ENCODE measurements at regions of chr17 and their contacts with region 1.

Region 1: GRCh38 chr17:17812211-17813057 is 24.4 kb downstream of the SREBF1 start:
- DNase-seq: peak in 1 of 2 experiments; percentile 99
- H3K4me3 ChIP-seq: peak overlapping the region in 1 of 4 experiments; percentile 14; a peak in 1 of 8 replicates
- H3K27ac ChIP-seq: no peak overlapping the region
- H3K4me1 ChIP-seq: peaks cover 0 to 20% (median 12%) of the 10 kb centered on the region in 4 experiments; a peak in 6 of 7 replicates
- H3K27me3 ChIP-seq: peaks cover 6 to 23% (median 16%) of the 10 kb centered on the region in 4 experiments
- CTCF ChIP-seq: peak; percentile 93 to 97 (median 97)
- EP300 ChIP-seq: no peak
- POLR2A ChIP-seq: no peak
- RAD21 ChIP-seq: peak; percentile 86 to 92

Region 2: DNA sequence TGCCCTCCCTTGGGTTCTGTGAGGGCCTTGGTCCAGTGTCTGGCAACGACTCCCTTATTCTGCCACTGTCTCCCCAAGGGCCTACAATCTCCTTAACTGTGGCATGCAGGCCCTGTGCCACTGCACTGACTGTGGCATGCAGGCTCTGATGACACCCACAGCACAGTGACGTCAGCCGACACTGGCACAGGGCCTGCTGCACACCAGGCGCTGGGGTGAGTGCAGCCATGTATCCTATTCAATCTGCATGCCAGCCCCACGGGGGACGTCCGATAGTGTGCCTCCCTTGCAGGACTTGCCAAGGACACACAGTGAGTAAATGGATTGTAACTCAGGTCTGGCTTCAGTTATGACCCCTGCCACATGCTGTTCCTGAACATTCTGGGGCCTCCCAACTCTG is 276.5 kb before region 1 on chr17:
- CTCF ChIA-PET with region 1: no interaction called
- POLR2A ChIA-PET with region 1: no interaction called
- DNase-seq: no peak
- H3K4me3 ChIP-seq: no peak overlapping the region
- H3K27ac ChIP-seq: no peak overlapping the region
- H3K4me1 ChIP-seq: no peaks in the 10 kb centered on the region; a peak in 1 of 7 replicates
- H3K27me3 ChIP-seq: no peaks in the 10 kb centered on the region
- CTCF ChIP-seq: no peak
- EP300 ChIP-seq: no peak
- POLR2A ChIP-seq: no peak
- RAD21 ChIP-seq: no peak

Region 3: DNA sequence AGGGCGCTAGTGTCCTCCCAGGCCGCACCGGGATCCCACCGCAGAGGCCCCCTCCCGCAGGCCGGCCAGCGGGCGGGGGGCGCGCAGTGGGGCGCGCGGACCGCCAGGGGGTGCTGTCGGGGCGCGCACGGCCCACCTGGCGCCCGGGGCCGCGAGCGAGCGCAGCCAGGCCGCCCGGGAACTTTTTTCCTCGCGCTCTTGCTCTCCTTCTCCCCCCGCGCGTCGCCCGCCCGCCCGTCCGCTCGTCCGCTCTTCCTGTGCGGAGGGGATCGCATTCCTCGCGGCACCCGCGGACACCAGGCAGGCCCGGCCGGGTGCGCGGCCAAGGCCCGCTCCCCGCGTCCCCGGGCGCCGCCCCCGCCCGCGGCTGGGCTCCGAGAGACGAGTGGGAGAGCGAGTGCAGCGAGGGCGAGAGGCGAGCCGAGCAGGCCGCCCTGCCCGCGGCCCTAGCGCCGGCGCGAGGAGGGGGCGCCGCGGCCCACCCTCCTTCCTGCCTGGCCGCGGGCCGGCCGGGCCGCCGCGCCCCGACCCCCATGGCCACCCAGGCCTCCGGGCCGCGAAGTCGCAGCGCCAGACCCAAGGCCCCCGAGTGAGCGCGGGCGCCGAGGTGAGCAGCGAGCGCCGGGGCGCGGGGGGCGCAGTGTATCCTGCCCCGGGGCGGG is 131.1 kb before region 1 on chr17 and contains the start of gene RAI1:
- CTCF ChIA-PET with region 1: interaction called, 12 read pairs
- POLR2A ChIA-PET with region 1: interaction called, 4 read pairs
- DNase-seq: peak in 1 of 2 experiments; percentile 83
- H3K4me3 ChIP-seq: peak within 1 kb of the TSS; percentile 34 to 71 (median 38); a peak in 6 of 8 replicates
- H3K27ac ChIP-seq: no peak within 1 kb of the TSS
- H3K4me1 ChIP-seq: peaks cover 4 to 30% (median 22%) of the 10 kb centered on the region in 4 experiments
- H3K27me3 ChIP-seq: peaks cover 70 to 96% (median 94%) of the 10 kb centered on the region in 4 experiments
- CTCF ChIP-seq: peak; percentile 77 to 83 (median 80)
- EP300 ChIP-seq: no peak
- POLR2A ChIP-seq: no peak
- RAD21 ChIP-seq: peak; percentile 41 to 82; a peak in 3 of 4 replicates
- total RNA-seq, gene RAI1: 0.80 and 1.2 TPM in 2 replicates

Region 4: GRCh38 chr17:17783116-17783824 is 29.2 kb before region 1 on chr17:
- CTCF ChIA-PET with region 1: interaction called, 48 read pairs
- POLR2A ChIA-PET with region 1: interaction called, 5 read pairs
- DNase-seq: peak; percentile 38 to 83
- H3K4me3 ChIP-seq: peak overlapping the region; percentile 58 to 75 (median 64)
- H3K27ac ChIP-seq: no peak overlapping the region
- H3K4me1 ChIP-seq: peaks cover 20 to 38% (median 27%) of the 10 kb centered on the region in 4 experiments
- H3K27me3 ChIP-seq: peaks cover 0 to 40% (median 13%) of the 10 kb centered on the region in 4 experiments; a peak in 6 of 7 replicates
- CTCF ChIP-seq: peak; percentile 5 to 26 (median 21); a peak in 3 of 4 replicates
- EP300 ChIP-seq: no peak
- POLR2A ChIP-seq: no peak
- RAD21 ChIP-seq: no peak

Region 5: GRCh38 chr17:17823433-17824118 is 11.1 kb after region 1 on chr17:
- CTCF ChIA-PET with region 1: interaction called, 32 read pairs
- POLR2A ChIA-PET with region 1: interaction called, 532 read pairs
- DNase-seq: peak in 1 of 2 experiments; percentile 93
- H3K4me3 ChIP-seq: peak overlapping the region in 3 of 4 experiments; percentile 29 to 51 (median 38); a peak in 7 of 8 replicates
- H3K27ac ChIP-seq: peak overlapping the region; percentile 78
- H3K4me1 ChIP-seq: peaks cover 13 to 37% (median 27%) of the 10 kb centered on the region in 4 experiments
- H3K27me3 ChIP-seq: no peaks in the 10 kb centered on the region; a peak in 1 of 7 replicates
- CTCF ChIP-seq: no peak
- EP300 ChIP-seq: peak in 1 of 2 experiments; percentile 87; a peak in 2 of 3 replicates
- POLR2A ChIP-seq: no peak
- RAD21 ChIP-seq: no peak

Region 6: GRCh38 chr17:17859909-17860765 is 47.7 kb after region 1 on chr17:
- CTCF ChIA-PET with region 1: interaction called, 375 read pairs
- POLR2A ChIA-PET with region 1: interaction called, 10 read pairs
- DNase-seq: peak in 1 of 2 experiments; percentile 86
- H3K4me3 ChIP-seq: no peak overlapping the region
- H3K27ac ChIP-seq: no peak overlapping the region
- H3K4me1 ChIP-seq: peaks cover 0 to 10% (median 3%) of the 10 kb centered on the region in 4 experiments; a peak in 2 of 7 replicates
- H3K27me3 ChIP-seq: no peaks in the 10 kb centered on the region
- CTCF ChIP-seq: peak; percentile 96 to 100 (median 99)
- EP300 ChIP-seq: peak in 1 of 2 experiments; percentile 63; a peak in 1 of 3 replicates
- POLR2A ChIP-seq: no peak
- RAD21 ChIP-seq: peak; percentile 94 to 96

Region 7: DNA sequence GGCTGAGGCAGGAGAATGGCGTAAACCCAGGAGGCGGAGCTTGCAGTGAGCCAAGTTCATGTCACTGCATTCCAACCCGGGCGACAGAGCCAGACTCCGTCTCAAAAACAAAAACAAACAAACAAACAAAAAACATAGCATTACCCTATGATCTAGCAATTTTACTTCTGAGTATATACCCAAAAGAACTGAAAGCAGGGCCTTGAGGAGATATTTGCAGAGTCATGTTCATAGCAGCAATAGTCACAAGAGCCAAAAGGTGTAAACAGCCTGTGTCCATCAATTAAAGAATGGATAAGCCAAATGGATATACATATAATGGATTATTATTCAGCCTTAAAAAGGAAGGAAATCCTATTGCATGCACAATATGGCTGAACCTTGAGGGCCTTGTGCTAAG is 96.6 kb after region 1 on chr17:
- CTCF ChIA-PET with region 1: no interaction called
- POLR2A ChIA-PET with region 1: no interaction called
- DNase-seq: no peak
- H3K4me3 ChIP-seq: no peak overlapping the region
- H3K27ac ChIP-seq: no peak overlapping the region
- H3K4me1 ChIP-seq: peaks cover 0 to 6% (median 2%) of the 10 kb centered on the region in 4 experiments; a peak in 4 of 7 replicates
- H3K27me3 ChIP-seq: no peaks in the 10 kb centered on the region
- CTCF ChIP-seq: no peak
- EP300 ChIP-seq: no peak
- POLR2A ChIP-seq: no peak
- RAD21 ChIP-seq: no peak

Region 8: DNA sequence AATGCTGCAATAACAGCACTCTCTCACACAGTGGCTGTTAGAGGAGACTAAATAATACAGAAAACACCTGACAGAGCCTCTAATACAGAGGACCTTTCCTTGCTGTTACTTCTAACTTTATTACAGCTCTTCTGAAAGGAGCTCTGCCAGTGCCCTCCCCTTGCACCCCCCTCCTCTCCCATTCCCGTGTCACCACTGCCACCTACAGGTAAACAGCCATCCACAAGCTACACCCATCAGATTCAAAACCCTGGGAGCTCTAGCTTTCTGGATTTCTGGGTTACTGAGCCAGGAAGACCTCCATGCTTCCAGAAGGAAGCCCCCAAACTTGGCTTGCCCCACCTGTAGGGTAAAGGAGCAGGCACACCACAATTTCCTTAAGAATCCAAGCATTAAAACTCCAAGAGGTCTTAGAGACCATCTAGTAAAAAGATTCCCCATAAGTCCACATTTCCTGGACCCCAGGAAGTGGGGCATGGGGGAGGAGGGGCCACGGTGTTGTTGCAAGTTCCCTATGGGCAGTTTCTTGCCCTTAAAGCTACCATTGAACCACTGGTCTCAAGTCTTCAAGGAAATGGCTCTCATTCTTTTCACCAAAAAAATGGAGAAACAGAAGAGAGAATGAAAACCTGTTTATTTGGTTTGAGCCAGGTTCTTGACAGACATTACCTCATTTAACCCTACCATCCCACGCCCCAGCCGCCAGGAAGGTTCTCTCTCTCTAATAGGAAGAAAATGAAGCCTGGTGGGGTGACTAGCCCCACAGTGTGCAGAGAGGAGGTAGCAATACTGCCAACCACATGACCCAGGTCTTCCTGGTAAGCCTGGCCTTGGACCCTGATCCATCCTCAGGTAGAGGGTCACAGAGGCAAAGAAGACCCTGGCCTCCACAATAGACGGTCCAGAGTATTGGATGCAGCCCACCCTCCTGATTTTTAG is 107.0 kb after region 1 on chr17:
- CTCF ChIA-PET with region 1: interaction called, 31 read pairs
- POLR2A ChIA-PET with region 1: interaction called, 4 read pairs
- DNase-seq: peak in 1 of 2 experiments; percentile 75
- H3K4me3 ChIP-seq: no peak overlapping the region
- H3K27ac ChIP-seq: no peak overlapping the region
- H3K4me1 ChIP-seq: peaks cover 13 to 18% (median 16%) of the 10 kb centered on the region in 4 experiments
- H3K27me3 ChIP-seq: no peaks in the 10 kb centered on the region; a peak in 1 of 7 replicates
- CTCF ChIP-seq: peak; percentile 79 to 91 (median 86)
- EP300 ChIP-seq: no peak
- POLR2A ChIP-seq: no peak
- RAD21 ChIP-seq: peak; percentile 94 to 99